Spleen (tissue), 13 donors: ENCODE measurements at regions of chr11 and their contacts with region 1.

Region 1: GRCh38 chr11:34585735-34586487 is 35.0 kb upstream of the EHF start:
- DNase-seq: no peak
- H3K4me3 ChIP-seq: no peak overlapping the region
- H3K27ac ChIP-seq: peak overlapping the region in 1 of 8 donors; percentile 10
- H3K4me1 ChIP-seq: peaks cover 0 to 19% (median 14%) of the 10 kb centered on the region in 6 donors
- H3K27me3 ChIP-seq: peaks cover 0 to 11% (median 0%) of the 10 kb centered on the region in 7 donors
- CTCF ChIP-seq: peak; percentile 21 to 72 (median 58)
- POLR2A ChIP-seq: no peak

Region 2: GRCh38 chr11:34278693-34279297 is 307.1 kb before region 1 on chr11:
- intact Hi-C with region 1: no loop called
- DNase-seq: no peak
- H3K4me3 ChIP-seq: no peak overlapping the region
- H3K27ac ChIP-seq: no peak overlapping the region
- H3K4me1 ChIP-seq: no peaks in the 10 kb centered on the region
- H3K27me3 ChIP-seq: no peaks in the 10 kb centered on the region
- CTCF ChIP-seq: no peak
- POLR2A ChIP-seq: no peak

Region 3: GRCh38 chr11:34890812-34891211 is 304.9 kb after region 1 on chr11:
- intact Hi-C with region 1: loop called (anchors 5 kb)
- DNase-seq: no peak
- H3K4me3 ChIP-seq: no peak overlapping the region
- H3K27ac ChIP-seq: no peak overlapping the region
- H3K4me1 ChIP-seq: no peaks in the 10 kb centered on the region
- H3K27me3 ChIP-seq: no peaks in the 10 kb centered on the region
- CTCF ChIP-seq: peak in 2 of 11 experiments; percentile 10 to 42
- POLR2A ChIP-seq: no peak

Region 4: GRCh38 chr11:35391922-35392813 is 806.3 kb after region 1 on chr11:
- intact Hi-C with region 1: loop called (anchors 5 kb)
- DNase-seq: peak; percentile 94
- H3K4me3 ChIP-seq: peak overlapping the region in 1 of 8 donors; percentile 12
- H3K27ac ChIP-seq: no peak overlapping the region
- H3K4me1 ChIP-seq: peaks cover 4 to 20% (median 16%) of the 10 kb centered on the region in 6 donors
- H3K27me3 ChIP-seq: peaks cover 0 to 7% (median 0%) of the 10 kb centered on the region in 7 donors
- CTCF ChIP-seq: peak; percentile 74 to 93 (median 89)
- POLR2A ChIP-seq: no peak